PC-9 (cell line): ENCODE measurements at regions of chr7 and their contacts with region 1.

Region 1: DNA sequence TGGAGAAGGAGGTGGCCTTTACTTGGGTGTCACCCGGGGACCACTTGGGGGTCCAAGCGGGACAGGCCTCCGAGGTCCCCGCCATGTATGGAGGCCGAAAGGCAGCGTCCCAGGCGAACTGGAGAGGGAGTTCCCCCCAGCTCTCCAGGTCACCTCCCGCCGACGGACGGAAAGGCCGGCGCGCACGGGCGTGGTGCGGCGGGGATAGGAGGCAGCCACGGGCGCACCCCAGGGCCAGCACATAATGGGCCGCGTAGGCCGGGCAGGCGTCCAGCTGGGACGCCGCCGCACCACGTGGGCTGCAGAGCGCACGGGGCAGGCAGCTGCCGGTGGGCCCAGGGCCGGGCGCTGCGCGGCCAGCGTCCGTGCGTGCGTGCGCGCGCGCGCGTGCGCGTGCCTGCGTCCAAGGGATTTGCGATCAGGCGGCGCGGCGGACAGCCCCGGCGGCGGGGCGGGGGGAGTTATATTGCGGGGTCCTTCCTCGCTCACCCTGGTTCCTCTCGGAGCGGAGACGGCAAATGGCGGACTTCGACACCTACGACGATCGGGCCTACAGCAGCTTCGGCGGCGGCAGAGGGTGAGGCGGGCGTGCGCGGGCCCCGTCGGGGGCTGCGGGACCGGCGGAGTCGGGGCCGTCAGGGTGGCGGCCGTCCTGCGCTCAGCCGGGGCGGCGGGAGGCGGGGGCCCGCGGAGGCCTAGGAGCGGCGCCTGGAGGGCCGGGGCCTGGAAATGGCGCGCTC is at the start of gene EIF4H:
- DNase-seq: peak; percentile 75 to 99
- H3K4me3 ChIP-seq: peak within 1 kb of the TSS; percentile 92
- H3K27ac ChIP-seq: peak within 1 kb of the TSS; percentile 77
- H3K4me1 ChIP-seq: peaks cover 37% of the 10 kb centered on the region
- H3K27me3 ChIP-seq: no peaks in the 10 kb centered on the region
- CTCF ChIP-seq: no peak
- total RNA-seq, gene EIF4H: 315 and 459 TPM in 2 replicates

Region 2: DNA sequence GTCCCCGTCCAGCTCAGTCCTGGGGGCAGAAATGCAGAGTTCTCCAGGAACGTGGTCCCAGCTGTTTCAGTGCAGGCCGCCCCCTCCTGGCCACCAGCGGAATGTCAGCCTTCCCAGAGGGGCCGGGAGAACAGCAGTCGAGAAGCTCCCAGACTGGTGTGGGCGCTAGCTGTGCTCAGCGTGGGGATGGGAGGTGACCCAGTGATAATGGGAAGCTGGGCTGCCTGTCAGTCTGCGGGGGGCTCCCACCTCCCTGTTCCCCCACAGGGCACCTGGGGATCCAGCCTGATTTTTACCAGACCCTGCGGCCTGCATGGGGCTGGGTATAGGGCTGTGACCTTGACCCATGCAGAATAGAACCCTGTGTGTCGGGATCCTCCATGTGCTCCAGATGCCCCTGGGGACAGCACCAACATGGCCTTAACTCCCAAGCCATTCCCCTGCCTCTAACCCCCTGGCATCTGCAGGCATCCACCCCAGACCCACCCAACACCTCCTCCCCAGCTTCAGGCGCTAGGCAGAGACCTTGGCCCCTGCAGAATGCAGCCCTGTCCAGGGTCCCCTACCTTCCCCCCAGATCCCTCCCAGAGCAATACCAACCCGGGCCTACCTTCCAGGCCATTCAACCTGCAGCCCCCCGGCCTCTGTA is 147.0 kb before region 1 on chr7:
- CTCF ChIA-PET with region 1: no interaction called
- POLR2A ChIA-PET with region 1: no interaction called
- intact Hi-C with region 1: no loop called
- DNase-seq: peak in 1 of 2 experiments; percentile 72
- H3K4me3 ChIP-seq: no peak overlapping the region
- H3K27ac ChIP-seq: no peak overlapping the region
- H3K4me1 ChIP-seq: peaks cover 12% of the 10 kb centered on the region
- H3K27me3 ChIP-seq: peaks cover 12% of the 10 kb centered on the region; the same call in 1 of the 2 replicates
- CTCF ChIP-seq: peak; percentile 95

Region 3: GRCh38 chr7:74083117-74083876 is 90.7 kb before region 1 on chr7 and contains the start of gene LIMK1:
- CTCF ChIA-PET with region 1: interaction called, 3 read pairs
- POLR2A ChIA-PET with region 1: no interaction called
- intact Hi-C with region 1: loop called (anchors 2 kb)
- DNase-seq: peak in 1 of 2 experiments; percentile 89
- H3K4me3 ChIP-seq: peak within 1 kb of the TSS; percentile 97
- H3K27ac ChIP-seq: peak within 1 kb of the TSS; percentile 62
- H3K4me1 ChIP-seq: peaks cover 32% of the 10 kb centered on the region
- H3K27me3 ChIP-seq: no peaks in the 10 kb centered on the region
- CTCF ChIP-seq: no peak
- total RNA-seq, gene LIMK1: 128 and 148 TPM in 2 replicates

Region 4: GRCh38 chr7:74104703-74105102 is 69.3 kb before region 1 on chr7:
- CTCF ChIA-PET with region 1: no interaction called
- POLR2A ChIA-PET with region 1: interaction called, 3 read pairs
- intact Hi-C with region 1: loop called (anchors 2 kb)
- DNase-seq: peak; percentile 87 to 92
- H3K4me3 ChIP-seq: no peak overlapping the region
- H3K27ac ChIP-seq: peak overlapping the region; percentile 73
- H3K4me1 ChIP-seq: peaks cover 27% of the 10 kb centered on the region
- H3K27me3 ChIP-seq: no peaks in the 10 kb centered on the region
- CTCF ChIP-seq: no peak

Region 5: DNA sequence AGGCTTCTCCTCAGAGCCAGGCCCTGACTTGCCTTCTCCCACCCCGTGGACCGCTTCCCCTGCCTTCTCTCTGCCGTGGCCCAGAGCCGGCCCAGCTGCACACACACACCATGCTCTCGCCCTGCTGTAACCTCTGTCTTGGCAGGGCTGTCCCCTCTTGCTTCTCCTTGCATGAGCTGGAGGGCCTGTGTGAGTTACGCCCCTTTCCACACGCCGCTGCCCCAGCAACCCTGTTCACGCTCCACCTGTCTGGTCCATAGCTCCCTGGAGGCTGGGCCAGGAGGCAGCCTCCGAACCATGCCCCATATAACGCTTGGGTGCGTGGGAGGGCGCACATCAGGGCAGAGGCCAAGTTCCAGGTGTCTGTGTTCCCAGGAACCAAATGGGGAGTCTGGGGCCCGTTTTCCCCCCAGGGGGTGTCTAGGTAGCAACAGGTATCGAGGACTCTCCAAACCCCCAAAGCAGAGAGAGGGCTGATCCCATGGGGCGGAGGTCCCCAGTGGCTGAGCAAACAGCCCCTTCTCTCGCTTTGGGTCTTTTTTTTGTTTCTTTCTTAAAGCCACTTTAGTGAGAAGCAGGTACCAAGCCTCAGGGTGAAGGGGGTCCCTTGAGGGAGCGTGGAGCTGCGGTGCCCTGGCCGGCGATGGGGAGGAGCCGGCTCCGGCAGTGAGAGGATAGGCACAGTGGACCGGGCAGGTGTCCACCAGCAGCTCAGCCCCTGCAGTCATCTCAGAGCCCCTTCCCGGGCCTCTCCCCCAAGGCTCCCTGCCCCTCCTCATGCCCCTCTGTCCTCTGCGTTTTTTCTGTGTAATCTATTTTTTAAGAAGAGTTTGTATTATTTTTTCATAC is 52.4 kb before region 1 on chr7:
- CTCF ChIA-PET with region 1: interaction called, 5 read pairs
- POLR2A ChIA-PET with region 1: interaction called, 10 read pairs
- intact Hi-C with region 1: no loop called
- DNase-seq: no peak
- H3K4me3 ChIP-seq: no peak overlapping the region
- H3K27ac ChIP-seq: no peak overlapping the region
- H3K4me1 ChIP-seq: no peaks in the 10 kb centered on the region
- H3K27me3 ChIP-seq: no peaks in the 10 kb centered on the region
- CTCF ChIP-seq: no peak

Region 6: DNA sequence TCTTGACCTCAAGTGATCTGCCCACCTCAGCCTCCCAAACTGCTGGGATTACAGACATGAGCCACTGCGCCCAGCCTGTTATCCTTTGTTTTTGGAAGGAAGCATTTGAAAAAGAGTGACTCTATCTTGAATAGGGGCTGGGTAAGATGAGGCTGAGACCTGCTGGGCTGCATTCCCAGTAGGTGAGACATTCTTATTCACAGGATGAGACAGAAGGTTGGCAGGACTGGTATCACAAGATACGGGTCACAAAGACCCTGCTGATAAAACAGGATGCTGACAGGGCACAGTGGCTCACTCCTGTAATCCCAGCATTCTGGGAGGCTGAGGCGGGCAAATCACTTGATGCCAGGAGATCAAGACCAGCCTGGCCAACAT is 40.4 kb before region 1 on chr7:
- CTCF ChIA-PET with region 1: interaction called, 3 read pairs
- POLR2A ChIA-PET with region 1: interaction called, 4 read pairs
- intact Hi-C with region 1: loop called (anchors 1 kb)
- DNase-seq: peak; percentile 92 to 97
- H3K4me3 ChIP-seq: peak overlapping the region; percentile 21; the same call in 1 of the 2 replicates
- H3K27ac ChIP-seq: peak overlapping the region; percentile 94
- H3K4me1 ChIP-seq: peaks cover 28% of the 10 kb centered on the region
- H3K27me3 ChIP-seq: no peaks in the 10 kb centered on the region
- CTCF ChIP-seq: no peak

Region 7: DNA sequence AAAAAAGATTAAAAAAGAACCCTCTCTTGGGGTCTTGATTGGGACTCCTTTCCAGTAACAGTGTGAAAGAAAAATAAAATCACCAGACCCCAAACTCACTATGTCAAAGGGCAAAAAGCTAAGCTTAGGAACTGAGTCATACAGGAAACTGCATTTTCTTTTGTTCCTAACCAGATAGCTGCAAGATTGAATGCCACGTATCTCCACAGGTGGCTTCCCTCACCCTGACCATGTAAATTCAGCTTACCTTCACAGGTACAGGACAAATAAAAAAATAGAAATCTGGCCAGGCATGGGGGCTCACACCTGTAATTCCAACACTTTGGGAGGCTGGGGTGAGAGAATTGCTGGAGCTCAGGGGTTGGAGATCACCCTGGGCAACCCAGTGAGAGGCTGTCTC is 32.3 kb before region 1 on chr7:
- CTCF ChIA-PET with region 1: interaction called, 12 read pairs
- POLR2A ChIA-PET with region 1: no interaction called
- intact Hi-C with region 1: no loop called
- DNase-seq: peak; percentile 38 to 89
- H3K4me3 ChIP-seq: peak overlapping the region; percentile 20; the same call in 1 of the 2 replicates
- H3K27ac ChIP-seq: peak overlapping the region; percentile 100
- H3K4me1 ChIP-seq: peaks cover 30% of the 10 kb centered on the region
- H3K27me3 ChIP-seq: no peaks in the 10 kb centered on the region
- CTCF ChIP-seq: no peak

Region 8: DNA sequence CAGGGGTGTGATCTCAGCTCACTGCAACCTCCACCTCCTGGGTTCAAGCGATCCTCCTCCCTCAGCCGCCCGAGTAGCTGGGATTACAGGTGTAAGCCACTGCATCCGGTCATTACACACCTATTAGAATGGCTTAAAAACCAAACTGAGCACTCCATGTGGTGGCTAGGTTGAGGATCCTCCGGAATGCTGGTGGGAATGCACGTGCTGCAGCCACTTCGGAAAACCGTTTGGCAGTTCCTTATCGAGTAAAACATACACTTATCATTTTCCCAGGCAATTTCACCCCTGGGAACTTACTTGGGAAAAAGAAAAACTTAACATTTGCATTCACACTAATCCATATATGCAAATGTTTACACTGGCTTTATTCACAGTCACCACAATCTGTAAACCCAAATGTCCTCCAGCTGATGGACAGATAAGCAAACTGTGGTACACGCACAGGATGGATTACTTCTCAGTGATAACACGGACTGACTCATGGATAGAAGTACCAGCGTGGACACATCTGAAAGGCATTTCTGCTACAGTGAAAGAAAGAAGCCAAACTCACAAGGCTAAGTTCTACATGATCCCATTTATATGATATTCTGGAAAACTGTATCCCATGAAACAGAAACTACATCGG is 59.7 kb after region 1 on chr7:
- CTCF ChIA-PET with region 1: no interaction called
- POLR2A ChIA-PET with region 1: no interaction called
- intact Hi-C with region 1: no loop called
- DNase-seq: no peak
- H3K4me3 ChIP-seq: no peak overlapping the region
- H3K27ac ChIP-seq: no peak overlapping the region
- H3K4me1 ChIP-seq: no peaks in the 10 kb centered on the region
- H3K27me3 ChIP-seq: no peaks in the 10 kb centered on the region
- CTCF ChIP-seq: no peak